Activated CD4-positive, alpha-beta T cell treated with anti-CD3 and anti-CD28 coated beads for 36 hours (primary cell): ENCODE measurements at regions of chr12 and their contacts with region 1.

Region 1: DNA sequence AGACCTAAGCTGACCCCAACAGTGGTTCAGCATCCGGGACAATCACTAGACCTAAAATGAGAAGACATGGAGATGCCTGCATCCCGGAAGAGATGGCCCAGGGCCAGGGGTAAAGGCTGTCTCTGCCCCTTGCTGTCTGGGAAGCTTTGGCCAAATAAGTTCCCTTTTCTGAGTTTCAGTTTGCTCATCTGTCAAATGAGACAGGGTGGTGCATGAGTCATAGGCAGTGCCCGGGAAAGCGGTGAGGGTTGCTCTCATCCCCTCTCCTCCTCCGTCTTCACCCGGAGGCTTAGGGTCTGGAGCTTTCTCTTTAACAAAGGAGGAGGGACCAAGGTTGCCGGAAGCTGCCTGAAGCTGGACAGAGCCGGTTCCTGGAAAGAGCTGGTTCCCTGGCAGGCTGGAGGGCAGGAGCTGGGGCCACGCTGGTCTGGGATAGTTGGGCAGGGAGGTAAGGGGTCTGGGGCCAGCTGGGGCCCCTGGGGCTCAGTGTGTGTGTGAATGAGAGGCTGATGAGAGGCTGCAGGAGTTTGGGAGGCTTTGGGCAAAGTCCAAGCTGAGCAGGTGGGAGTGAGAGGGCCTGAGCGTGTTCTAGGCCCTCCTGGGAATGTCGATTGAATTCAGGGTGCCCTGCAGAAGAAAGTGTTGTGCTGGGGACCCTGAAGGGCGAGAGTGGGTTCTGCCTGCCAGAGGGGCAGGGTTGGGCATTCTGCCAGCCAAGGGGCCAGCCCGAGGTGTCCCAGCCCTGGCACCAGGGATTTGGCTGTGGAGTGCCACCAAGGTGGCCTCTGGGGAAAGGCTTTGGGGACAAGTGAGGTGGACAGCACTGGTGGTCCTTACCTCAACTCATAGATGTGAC is at the start of gene SDSL:
- DNase-seq: peak; percentile 82
- ATAC-seq: peak; percentile 99
- H3K4me3 Mint-ChIP-seq: peak within 1 kb of the TSS; percentile 83
- H3K27ac Mint-ChIP-seq: peak within 1 kb of the TSS; percentile 96
- H3K4me1 Mint-ChIP-seq: peaks cover 11% of the 10 kb centered on the region
- H3K27me3 Mint-ChIP-seq: no peaks in the 10 kb centered on the region
- total RNA-seq, gene SDSL: 1.5 to 3.9 TPM

Region 2: GRCh38 chr12:113310489-113310888 is 111.8 kb before region 1 on chr12:
- CTCF ChIA-PET with region 1: interaction called, 3 read pairs
- POLR2A ChIA-PET with region 1: no interaction called
- intact Hi-C with region 1: loop called (anchors 1 kb)
- DNase-seq: peak; percentile 29
- ATAC-seq: peak; percentile 39
- H3K4me3 Mint-ChIP-seq: no peak overlapping the region
- H3K27ac Mint-ChIP-seq: no peak overlapping the region
- H3K4me1 Mint-ChIP-seq: no peaks in the 10 kb centered on the region
- H3K27me3 Mint-ChIP-seq: no peaks in the 10 kb centered on the region

Region 3: GRCh38 chr12:113334786-113335540 is 87.3 kb before region 1 on chr12 and contains the start of gene SLC8B1:
- CTCF ChIA-PET with region 1: interaction called, 4 read pairs
- POLR2A ChIA-PET with region 1: no interaction called
- intact Hi-C with region 1: loop called in 1 of 2 experiments (anchors 1 kb)
- DNase-seq: peak; percentile 92
- ATAC-seq: peak; percentile 98
- H3K4me3 Mint-ChIP-seq: peak within 1 kb of the TSS; percentile 89
- H3K27ac Mint-ChIP-seq: peak within 1 kb of the TSS; percentile 76
- H3K4me1 Mint-ChIP-seq: peaks cover 17% of the 10 kb centered on the region
- H3K27me3 Mint-ChIP-seq: no peaks in the 10 kb centered on the region
- total RNA-seq, gene SLC8B1: 17.9 to 19.4 TPM

Region 4: DNA sequence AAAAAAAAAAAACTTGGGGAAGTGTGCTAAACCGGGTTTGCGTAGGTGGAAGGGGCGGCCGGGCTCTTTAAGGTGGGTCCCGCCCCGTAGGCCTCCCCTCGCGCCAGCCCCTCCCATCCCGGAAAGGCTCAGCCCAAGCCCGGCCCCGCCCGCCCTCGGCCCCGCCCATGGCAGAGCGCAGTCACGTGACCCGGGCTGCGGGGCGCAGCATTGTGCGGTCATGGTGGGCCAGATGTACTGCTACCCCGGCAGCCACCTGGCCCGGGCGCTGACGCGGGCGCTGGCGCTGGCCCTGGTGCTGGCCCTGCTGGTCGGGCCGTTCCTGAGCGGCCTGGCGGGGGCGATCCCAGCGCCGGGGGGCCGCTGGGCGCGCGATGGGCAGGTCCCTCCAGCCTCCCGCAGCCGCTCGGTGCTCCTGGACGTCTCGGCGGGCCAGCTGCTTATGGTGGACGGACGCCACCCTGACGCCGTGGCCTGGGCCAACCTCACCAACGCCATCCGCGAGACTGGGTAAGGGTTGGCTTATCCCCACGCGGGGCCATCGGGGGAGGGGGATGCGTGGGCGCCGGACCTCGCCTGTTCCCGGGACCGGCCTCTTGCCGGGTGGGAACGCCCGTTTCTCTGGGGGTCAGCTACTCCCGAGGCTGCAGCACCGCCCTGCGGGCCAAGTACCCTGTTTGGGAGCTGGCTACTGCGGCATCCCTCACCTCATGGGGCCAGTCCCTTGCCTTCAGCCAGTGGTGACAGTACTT is 63.7 kb before region 1 on chr12 and contains the start of gene PLBD2:
- CTCF ChIA-PET with region 1: no interaction called
- POLR2A ChIA-PET with region 1: interaction called, 3 read pairs
- intact Hi-C with region 1: loop called in 1 of 2 experiments (anchors 1 kb)
- DNase-seq: peak; percentile 98
- ATAC-seq: peak; percentile 98
- H3K4me3 Mint-ChIP-seq: peak within 1 kb of the TSS; percentile 84
- H3K27ac Mint-ChIP-seq: peak within 1 kb of the TSS; percentile 86
- H3K4me1 Mint-ChIP-seq: peaks cover 22% of the 10 kb centered on the region
- H3K27me3 Mint-ChIP-seq: no peaks in the 10 kb centered on the region
- total RNA-seq, gene PLBD2: 13.7 to 17.3 TPM